HCT116 (cell line): ENCODE measurements at regions of chr19 and their contacts with region 1.

Region 1: DNA sequence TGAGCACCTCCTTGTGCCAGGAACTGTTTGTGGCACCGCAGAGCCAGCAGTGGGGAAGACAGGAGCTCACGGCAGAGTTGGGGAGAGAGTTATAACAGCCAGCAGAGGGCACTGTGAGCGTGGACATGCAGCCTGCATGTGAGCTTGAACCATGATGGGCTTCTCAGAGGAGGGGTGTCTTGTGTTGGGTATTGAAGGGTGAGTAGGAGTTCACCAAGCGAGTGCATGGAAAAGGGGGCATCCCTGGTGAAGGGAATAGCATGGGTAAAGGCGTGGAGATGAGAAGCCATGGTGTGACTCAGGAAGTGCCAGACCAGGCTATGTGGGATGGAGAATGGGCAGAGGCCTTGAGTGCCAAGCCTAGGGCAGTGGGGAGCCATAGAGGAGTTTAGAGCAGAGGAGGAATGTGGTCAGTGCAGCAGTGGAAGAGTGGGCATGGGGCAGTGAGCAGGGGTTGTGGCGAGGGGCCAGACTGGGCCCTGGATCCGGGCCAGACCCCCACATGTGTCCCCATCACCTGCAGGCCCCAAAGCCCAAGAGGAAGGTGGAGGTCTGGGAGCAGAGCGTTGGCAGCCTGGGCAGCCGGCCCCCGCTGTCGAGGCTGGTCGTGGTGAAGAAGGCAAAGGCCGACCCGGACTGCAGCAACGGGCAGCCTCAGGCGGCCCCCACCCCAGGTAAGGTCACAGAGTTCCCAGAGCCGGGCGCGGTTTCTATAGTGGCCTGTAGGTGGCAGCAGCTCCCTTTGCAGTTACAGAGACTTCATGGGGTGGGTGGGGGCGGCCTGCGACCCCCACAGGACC is 11.8 kb upstream of the SHD start:
- DNase-seq: peak; percentile 75
- ATAC-seq: peak; percentile 92
- H3K4me3 ChIP-seq: no peak overlapping the region
- H3K27ac ChIP-seq: no peak overlapping the region
- H3K4me1 ChIP-seq: peaks cover 0 to 7% of the 10 kb centered on the region in 2 experiments; a peak in 1 of 4 replicates
- H3K27me3 ChIP-seq: no peaks in the 10 kb centered on the region
- CTCF ChIP-seq: peak; percentile 82 to 95 (median 88)
- POLR2A ChIP-seq: no peak
- RAD21 ChIP-seq: peak; percentile 90

Region 2: DNA sequence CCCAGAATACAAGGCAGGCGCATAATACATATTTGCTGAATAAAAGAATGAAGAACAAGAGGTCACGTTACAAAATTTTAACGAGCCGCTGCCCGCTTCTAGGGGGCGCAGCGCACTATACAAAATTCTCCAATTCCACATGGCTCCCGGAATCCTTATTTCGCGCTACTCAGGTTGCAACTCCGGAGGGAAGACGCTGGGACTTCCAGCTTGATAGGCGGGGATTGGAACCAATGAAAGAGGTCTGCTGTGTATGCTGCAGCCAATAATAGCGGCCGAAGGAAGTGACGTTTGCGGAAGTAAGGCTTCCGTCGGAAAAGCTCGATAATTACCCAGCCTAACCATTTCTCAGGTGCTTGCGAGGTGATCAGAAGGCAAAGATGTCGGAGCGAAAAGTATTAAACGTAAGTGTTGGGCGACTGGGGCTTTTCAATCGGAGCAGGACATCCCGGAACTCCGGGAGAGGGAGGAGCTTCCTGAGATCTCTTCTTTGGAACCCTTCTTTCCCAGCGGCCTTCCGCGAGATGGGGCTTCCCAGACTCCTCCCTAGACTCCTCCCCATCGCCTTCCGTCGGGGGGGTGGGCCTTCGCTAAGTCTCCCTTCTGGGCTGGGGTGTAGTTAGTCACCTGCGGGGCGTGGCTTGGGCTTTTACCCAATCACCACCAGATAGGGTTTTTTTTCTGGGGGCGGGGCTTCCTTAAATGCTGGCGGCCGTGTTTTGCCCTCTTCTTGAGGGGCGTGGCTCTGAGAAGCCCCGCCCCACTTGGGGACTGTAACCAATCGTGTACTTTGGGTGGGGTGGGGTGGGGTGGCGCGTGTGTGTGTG is 20.3 kb before region 1 on chr19 and contains the start of gene YJU2:
- CTCF ChIA-PET with region 1: interaction called, 15 read pairs
- POLR2A ChIA-PET with region 1: no interaction called
- RAD21 ChIA-PET with region 1: interaction called in 1 of 2 experiments, 5 read pairs
- intact Hi-C with region 1: no loop called
- DNase-seq: peak; percentile 99
- ATAC-seq: peak; percentile 95
- H3K4me3 ChIP-seq: peak within 1 kb of the TSS; percentile 66 to 88
- H3K27ac ChIP-seq: peak within 1 kb of the TSS; percentile 85
- H3K4me1 ChIP-seq: peaks cover 13 to 16% of the 10 kb centered on the region in 2 experiments
- H3K27me3 ChIP-seq: no peaks in the 10 kb centered on the region
- CTCF ChIP-seq: peak; percentile 57 to 71 (median 67); a peak in 5 of 6 replicates
- POLR2A ChIP-seq: peak; percentile 12
- RAD21 ChIP-seq: peak; percentile 56
- total RNA-seq, gene YJU2: 26.9 TPM

Region 3: GRCh38 chr19:4278419-4279266 is 11.3 kb after region 1 on chr19 and contains the start of gene SHD:
- CTCF ChIA-PET with region 1: interaction called, 10 read pairs
- POLR2A ChIA-PET with region 1: interaction called, 3 read pairs
- RAD21 ChIA-PET with region 1: no interaction called
- intact Hi-C with region 1: no loop called
- DNase-seq: no peak
- ATAC-seq: no peak
- H3K4me3 ChIP-seq: no peak within 1 kb of the TSS
- H3K27ac ChIP-seq: no peak within 1 kb of the TSS
- H3K4me1 ChIP-seq: peaks cover 0 to 10% of the 10 kb centered on the region in 2 experiments; a peak in 2 of 4 replicates
- H3K27me3 ChIP-seq: no peaks in the 10 kb centered on the region
- CTCF ChIP-seq: no peak
- POLR2A ChIP-seq: no peak
- RAD21 ChIP-seq: no peak
- total RNA-seq, gene SHD: 2.0 TPM

Region 4: DNA sequence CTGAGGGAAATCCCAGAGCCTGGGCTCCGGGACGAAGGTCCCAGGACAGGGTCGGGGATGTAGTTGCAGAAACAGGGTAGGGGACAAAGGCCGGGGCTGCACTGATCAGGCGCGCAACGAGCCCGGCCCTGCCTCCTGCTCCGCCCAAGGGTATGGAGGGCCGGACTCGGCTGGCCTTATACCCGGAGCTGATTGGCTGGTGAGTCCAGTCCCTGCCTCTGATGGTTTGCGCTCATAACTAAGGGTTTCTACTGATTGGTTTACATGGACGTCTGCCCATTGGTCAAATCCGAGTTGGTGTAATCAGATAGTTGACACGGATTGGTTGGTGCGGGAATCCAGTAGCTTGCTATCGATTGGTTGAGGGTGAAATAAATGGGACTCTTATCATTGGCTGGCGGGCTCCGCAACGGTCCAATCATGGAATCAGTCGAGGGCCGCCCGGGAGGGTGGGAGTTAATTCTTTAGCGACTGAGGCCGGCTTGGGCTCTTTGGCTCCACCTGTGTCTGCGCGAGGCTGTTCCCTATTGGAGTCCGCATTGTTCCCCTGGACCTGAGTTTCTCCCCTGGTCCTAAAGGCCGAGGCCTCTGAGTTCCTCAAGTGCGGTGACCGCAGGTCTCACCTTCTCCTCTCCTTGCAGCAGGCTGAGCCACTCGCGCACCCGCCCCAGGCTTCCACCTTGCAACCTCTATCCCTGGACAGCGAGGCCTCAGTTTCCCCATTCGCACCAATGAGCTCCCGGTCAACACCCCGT is 75.5 kb after region 1 on chr19:
- CTCF ChIA-PET with region 1: interaction called, 31 read pairs
- POLR2A ChIA-PET with region 1: interaction called, 10 read pairs
- RAD21 ChIA-PET with region 1: interaction called, 3 to 10 read pairs
- intact Hi-C with region 1: no loop called
- DNase-seq: peak; percentile 100
- ATAC-seq: peak; percentile 89
- H3K4me3 ChIP-seq: peak overlapping the region; percentile 69 to 75
- H3K27ac ChIP-seq: peak overlapping the region; percentile 86
- H3K4me1 ChIP-seq: peaks cover 7 to 18% of the 10 kb centered on the region in 2 experiments
- H3K27me3 ChIP-seq: no peaks in the 10 kb centered on the region
- CTCF ChIP-seq: peak in 2 of 3 experiments; percentile 5 to 21; a peak in 1 of 6 replicates
- POLR2A ChIP-seq: peak; percentile 78
- RAD21 ChIP-seq: no peak

Region 5: GRCh38 chr19:4352701-4353121 is 85.4 kb after region 1 on chr19:
- CTCF ChIA-PET with region 1: interaction called, 52 read pairs
- POLR2A ChIA-PET with region 1: no interaction called
- RAD21 ChIA-PET with region 1: interaction called, 15 to 17 read pairs
- intact Hi-C with region 1: loop called (anchors 1 kb)
- DNase-seq: no peak
- ATAC-seq: peak; percentile 77
- H3K4me3 ChIP-seq: no peak overlapping the region
- H3K27ac ChIP-seq: no peak overlapping the region
- H3K4me1 ChIP-seq: no peaks in the 10 kb centered on the region
- H3K27me3 ChIP-seq: no peaks in the 10 kb centered on the region
- CTCF ChIP-seq: peak; percentile 59 to 79 (median 66); a peak in 5 of 6 replicates
- POLR2A ChIP-seq: no peak
- RAD21 ChIP-seq: no peak; the same call in none of the 2 replicates

Region 6: DNA sequence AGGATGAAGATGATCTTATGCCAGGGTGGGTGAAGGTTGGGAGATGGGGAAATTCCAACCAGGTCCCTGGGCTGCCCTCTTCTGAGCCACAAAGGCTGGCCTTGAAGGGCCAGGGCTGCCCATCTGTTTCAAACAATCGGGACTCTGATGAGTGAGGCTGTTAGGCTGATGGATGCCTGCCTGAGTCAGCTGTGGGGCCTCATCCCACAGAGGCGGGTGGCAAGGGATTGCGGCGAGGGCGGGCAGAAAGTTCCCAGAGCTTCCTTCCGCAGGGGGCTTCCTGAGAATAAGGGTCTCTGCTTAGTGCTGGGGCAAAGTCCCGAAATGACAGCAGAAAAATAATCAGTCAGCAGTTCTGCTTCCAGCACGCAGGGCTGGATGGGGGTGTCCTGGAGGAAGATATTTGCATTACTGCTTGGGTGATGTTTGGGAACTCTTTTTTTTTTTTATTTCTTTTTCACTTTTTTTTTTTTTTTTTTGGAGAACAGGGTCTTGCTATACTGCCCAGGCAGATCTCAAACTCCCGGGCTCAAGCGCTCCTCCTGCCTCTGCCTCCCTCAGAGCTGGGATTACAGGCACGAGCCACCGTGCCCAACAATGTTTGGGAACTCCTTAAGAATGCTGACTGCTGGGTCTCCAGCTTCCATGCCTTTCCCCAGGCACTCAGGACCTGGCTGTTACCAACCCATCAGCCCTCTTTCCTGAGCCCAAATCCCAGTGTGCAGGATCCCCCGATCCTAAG is 118.9 kb after region 1 on chr19:
- CTCF ChIA-PET with region 1: no interaction called
- POLR2A ChIA-PET with region 1: no interaction called
- RAD21 ChIA-PET with region 1: no interaction called
- intact Hi-C with region 1: no loop called
- DNase-seq: no peak
- ATAC-seq: no peak
- H3K4me3 ChIP-seq: no peak overlapping the region
- H3K27ac ChIP-seq: no peak overlapping the region
- H3K4me1 ChIP-seq: peaks cover 0 to 2% of the 10 kb centered on the region in 2 experiments; a peak in 2 of 4 replicates
- H3K27me3 ChIP-seq: no peaks in the 10 kb centered on the region
- CTCF ChIP-seq: no peak
- POLR2A ChIP-seq: no peak
- RAD21 ChIP-seq: no peak

Region 7: DNA sequence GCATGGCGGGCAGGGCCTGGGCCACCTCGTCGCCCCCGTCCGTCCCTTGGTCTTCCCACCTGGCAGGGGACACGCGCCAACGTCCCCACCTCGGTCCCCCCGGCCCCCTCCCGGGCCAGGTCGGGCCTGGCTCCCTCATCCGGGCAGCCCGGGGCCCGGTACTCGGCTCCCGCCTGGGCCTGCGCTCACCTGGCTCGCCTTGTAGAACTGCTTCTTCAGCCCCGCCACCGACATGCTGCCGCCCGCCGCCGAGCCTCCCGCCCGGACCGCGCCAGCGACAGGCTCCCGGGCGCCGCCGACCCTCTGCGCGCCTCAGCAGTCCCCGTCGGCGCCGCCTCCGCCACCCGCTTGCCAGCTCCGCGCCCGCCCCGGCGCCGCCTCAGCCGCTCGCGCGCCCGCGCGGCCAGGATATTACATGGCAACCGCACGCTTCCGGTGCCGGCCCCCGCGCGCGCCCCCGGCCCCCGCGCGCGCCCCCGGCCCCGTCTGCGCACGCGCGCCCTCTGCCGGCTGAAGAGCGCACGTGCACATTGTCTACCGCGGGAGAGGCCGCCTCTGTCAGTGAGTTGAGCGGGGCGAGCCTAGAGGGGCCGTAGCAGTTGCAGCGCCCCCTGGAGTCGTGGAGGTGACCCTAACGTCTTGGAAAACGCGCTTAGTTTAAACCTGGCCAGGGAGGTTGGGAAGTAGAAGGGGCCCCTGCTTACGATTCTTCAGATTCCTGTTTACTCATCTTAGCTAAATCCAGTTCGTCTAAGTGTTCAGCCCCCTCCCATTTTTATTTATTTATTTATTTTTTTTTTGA is 133.0 kb after region 1 on chr19 and contains the start of gene SH3GL1:
- CTCF ChIA-PET with region 1: interaction called, 25 read pairs
- POLR2A ChIA-PET with region 1: no interaction called
- RAD21 ChIA-PET with region 1: interaction called in 1 of 2 experiments, 3 read pairs
- intact Hi-C with region 1: loop called (anchors 1 kb)
- DNase-seq: peak; percentile 86
- ATAC-seq: peak; percentile 71
- H3K4me3 ChIP-seq: peak within 1 kb of the TSS; percentile 93 to 97
- H3K27ac ChIP-seq: peak within 1 kb of the TSS; percentile 88
- H3K4me1 ChIP-seq: peaks cover 16 to 44% of the 10 kb centered on the region in 2 experiments
- H3K27me3 ChIP-seq: no peaks in the 10 kb centered on the region
- CTCF ChIP-seq: peak; percentile 89 to 98 (median 89)
- POLR2A ChIP-seq: peak; percentile 38
- RAD21 ChIP-seq: peak; percentile 58
- total RNA-seq, gene SH3GL1: 86.0 TPM

Region 8: DNA sequence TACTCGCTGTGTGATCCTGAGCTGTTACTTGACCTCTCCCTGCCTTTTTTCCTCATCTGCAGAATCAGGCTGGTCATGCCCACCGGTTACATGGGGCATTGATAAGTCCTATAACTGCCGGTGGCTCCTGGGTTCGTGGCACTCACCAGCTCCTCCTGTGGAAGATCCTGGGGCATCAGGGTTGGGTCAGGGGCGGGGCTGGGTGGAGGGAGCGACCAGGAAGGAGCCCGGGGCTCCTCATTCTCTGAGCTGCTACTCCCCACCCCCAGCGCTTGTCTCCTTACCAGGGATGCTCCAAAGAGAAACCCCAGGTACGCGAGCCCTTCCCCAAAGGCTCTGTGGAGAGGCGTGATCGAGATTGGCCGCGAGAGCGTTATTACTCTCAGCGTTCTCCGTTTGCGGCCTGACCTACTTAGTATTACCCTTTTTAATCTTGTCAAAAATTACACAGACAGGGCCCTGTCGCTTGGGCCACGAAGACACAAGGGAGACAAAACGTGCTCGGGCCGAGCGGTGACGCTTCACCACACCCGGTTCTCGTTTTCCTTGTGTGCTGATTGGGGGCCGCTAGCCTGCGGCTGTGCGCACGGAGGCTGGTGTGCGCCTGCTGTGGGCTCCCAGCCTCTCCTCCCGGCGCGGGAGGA is 215.5 kb after region 1 on chr19:
- CTCF ChIA-PET with region 1: no interaction called
- POLR2A ChIA-PET with region 1: no interaction called
- RAD21 ChIA-PET with region 1: no interaction called
- intact Hi-C with region 1: no loop called
- DNase-seq: no peak
- ATAC-seq: peak; percentile 58
- H3K4me3 ChIP-seq: no peak overlapping the region
- H3K27ac ChIP-seq: no peak overlapping the region
- H3K4me1 ChIP-seq: no peaks in the 10 kb centered on the region; a peak in 1 of 4 replicates
- H3K27me3 ChIP-seq: no peaks in the 10 kb centered on the region
- CTCF ChIP-seq: no peak
- POLR2A ChIP-seq: no peak
- RAD21 ChIP-seq: no peak

Region 9: GRCh38 chr19:4524808-4525562 is 257.7 kb after region 1 on chr19:
- CTCF ChIA-PET with region 1: interaction called, 31 read pairs
- POLR2A ChIA-PET with region 1: no interaction called
- RAD21 ChIA-PET with region 1: interaction called, 3 to 4 read pairs
- intact Hi-C with region 1: loop called (anchors 10 kb)
- DNase-seq: peak; percentile 8
- ATAC-seq: peak; percentile 88
- H3K4me3 ChIP-seq: no peak overlapping the region
- H3K27ac ChIP-seq: no peak overlapping the region
- H3K4me1 ChIP-seq: peaks cover 0 to 7% of the 10 kb centered on the region in 2 experiments; a peak in 1 of 4 replicates
- H3K27me3 ChIP-seq: no peaks in the 10 kb centered on the region
- CTCF ChIP-seq: peak; percentile 48 to 96 (median 83); a peak in 5 of 6 replicates
- POLR2A ChIP-seq: no peak
- RAD21 ChIP-seq: peak; percentile 50